ENCODE measurements at regions of chr17 and their contacts with region 1.

Region 1: DNA sequence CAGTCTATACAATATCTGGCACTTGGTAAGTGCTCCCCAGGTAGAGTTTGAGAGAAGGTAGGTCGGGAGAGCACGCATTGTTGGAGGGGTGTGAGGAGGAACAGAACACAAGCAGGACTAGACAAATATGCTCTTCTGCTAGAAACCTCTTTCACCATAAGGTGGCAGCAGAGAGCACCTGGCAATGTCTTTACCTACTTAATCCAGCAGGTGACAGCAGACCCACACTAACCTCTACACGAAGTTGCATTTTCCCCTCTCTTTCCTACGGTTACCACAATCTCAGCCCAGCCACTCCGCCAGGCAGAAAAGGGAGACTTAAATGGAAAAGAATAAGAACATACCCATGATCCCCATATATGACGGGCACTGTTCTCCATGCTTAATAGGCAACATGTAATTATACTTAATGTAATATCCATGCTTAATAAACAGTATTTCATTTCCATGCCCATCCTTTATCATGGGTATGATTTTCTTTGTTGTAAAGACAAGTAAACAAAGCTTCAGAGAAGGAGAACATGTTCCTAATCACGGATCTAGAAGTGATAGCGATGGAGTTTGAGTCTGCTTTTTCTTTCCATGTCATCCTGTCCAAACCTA is 55.1 kb upstream of the CCL2 start:
- DNase-seq: peak; percentile 81 to 84 (median 83)
- ATAC-seq: peak; percentile 88
- H3K4me3 ChIP-seq: no peak overlapping the region
- H3K27ac ChIP-seq: no peak overlapping the region
- H3K4me1 ChIP-seq: no peaks in the 10 kb centered on the region
- H3K27me3 ChIP-seq: no peaks in the 10 kb centered on the region
- CTCF ChIP-seq: peak; percentile 97 to 100 (median 100)
- POLR2A ChIP-seq: no peak

Region 2: DNA sequence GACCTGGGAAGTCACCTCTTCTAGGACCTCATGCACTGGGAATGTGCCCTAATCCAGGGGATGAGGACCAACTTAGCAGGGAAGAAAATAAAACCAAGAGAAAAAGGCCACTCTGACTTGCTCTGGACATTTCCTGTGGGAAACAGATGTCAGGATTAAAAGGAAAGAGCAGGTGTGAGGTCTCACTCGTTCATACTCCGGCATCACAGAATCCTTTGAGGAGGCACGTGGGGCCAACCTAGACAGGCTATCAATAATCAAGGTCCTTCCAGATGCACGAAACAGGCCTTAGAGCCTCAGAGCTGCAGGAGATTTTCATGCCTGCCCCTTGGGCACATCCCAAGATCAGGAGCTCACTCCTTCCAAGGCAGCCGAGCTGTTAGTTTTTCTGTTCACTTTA is 266.5 kb before region 1 on chr17:
- intact Hi-C with region 1: no loop called
- DNase-seq: no peak
- ATAC-seq: no peak
- H3K4me3 ChIP-seq: no peak overlapping the region
- H3K27ac ChIP-seq: no peak overlapping the region
- H3K4me1 ChIP-seq: no peaks in the 10 kb centered on the region
- H3K27me3 ChIP-seq: no peaks in the 10 kb centered on the region
- CTCF ChIP-seq: no peak
- POLR2A ChIP-seq: no peak

Region 3: DNA sequence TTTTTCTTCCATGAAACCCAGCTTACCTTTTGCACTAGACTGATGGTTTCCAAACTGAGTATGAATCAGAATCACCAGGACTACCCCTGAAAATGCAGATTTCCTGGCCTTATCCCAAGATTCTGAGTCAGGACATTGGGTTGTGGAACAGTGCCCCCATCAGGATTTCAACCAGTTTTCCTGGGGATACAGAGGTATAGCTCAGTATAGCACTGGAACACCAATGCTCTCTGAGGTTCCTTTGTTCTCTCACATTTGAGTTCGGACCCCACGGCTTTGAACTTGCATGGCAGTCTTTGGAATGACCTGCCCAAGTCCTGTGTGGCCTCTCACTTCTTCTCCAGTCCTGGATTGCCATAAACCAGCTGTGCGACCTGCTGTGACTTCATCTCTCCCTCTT is 106.4 kb after region 1 on chr17:
- intact Hi-C with region 1: loop called (anchors 10 kb)
- DNase-seq: peak in 2 of 4 donors; percentile 12 to 30
- ATAC-seq: peak; percentile 30
- H3K4me3 ChIP-seq: no peak overlapping the region
- H3K27ac ChIP-seq: no peak overlapping the region
- H3K4me1 ChIP-seq: no peaks in the 10 kb centered on the region
- H3K27me3 ChIP-seq: no peaks in the 10 kb centered on the region
- CTCF ChIP-seq: peak in 4 of 7 experiments; percentile 32 to 48 (median 41)
- POLR2A ChIP-seq: no peak

Region 4: DNA sequence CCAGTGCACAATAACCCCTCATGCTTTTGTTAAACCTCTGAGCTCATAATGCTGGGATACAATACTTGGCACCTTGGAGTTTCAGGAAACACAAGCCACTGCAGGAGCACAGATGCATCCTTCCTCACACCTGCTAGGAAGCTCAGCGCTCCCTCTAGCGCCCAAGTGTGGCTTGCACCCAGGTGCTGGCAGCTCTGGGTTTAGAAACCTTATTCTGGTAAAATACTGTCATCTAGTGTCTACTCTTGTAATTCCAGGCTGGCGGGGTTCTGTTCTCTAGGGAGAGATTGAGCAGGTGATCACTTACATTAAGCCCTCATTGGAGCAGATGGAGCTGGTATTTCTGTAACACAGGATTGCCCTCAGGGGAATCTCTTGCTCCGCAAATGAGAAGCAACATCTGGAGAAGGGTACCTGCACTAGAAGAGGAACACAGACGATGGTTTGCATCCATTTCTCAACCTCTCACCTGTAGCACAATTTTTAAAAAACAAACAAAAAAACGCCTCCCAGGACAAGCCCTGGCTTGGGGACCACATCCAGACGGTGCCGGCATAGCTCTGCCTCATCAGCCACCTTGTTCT is 161.5 kb after region 1 on chr17:
- intact Hi-C with region 1: loop called (anchors 2 kb)
- DNase-seq: peak; percentile 87 to 94 (median 91)
- ATAC-seq: peak; percentile 90
- H3K4me3 ChIP-seq: no peak overlapping the region
- H3K27ac ChIP-seq: no peak overlapping the region
- H3K4me1 ChIP-seq: no peaks in the 10 kb centered on the region
- H3K27me3 ChIP-seq: no peaks in the 10 kb centered on the region
- CTCF ChIP-seq: peak; percentile 95 to 100 (median 99)
- POLR2A ChIP-seq: no peak